Posterior cingulate gyrus (tissue), 11 donors: ENCODE measurements at regions of chr21 and their contacts with region 1.

Region 1: DNA sequence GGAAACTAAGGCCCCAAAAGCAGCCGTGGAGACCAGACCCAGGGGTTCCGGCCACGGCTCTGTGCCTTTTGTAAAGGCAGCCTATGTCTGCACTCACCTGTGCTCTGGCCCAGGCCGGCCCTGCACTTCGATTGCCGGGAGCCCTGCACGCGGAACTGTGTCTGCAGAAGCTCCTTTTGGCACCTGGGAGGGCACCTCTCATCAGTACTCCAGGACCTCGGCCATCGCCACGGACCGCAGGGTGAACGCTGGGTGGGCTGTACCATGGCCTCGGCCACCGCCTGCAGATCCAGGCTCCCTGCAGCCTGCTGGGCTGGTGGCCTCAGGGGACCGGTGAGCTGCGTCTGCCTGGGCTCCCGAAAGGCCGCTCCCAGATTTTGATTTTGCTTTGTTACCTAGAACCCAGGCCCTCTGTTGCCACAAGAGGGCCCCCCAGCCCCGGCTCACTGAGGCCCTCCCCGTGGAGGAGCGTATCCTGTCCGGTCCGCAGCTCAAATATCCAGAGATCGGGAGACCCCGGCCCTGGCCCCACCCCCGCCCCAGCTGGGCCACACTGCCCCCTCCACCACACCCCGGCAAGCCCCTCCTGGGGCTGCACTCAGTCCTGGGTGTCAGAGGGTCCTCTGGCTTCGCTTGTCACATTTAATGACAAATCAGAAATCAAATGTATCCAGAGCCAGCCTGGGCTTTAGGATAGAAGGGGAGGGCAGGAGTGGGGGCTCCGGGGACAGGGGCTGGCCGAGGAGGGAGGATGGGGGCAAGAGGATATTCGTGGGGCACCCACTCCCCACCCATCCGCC is 60.2 kb upstream of the PDE9A start:
- DNase-seq: peak; percentile 40 to 96 (median 75)

Region 2: GRCh38 chr21:42258153-42258884 is 334.9 kb before region 1 on chr21:
- intact Hi-C with region 1: no loop called
- DNase-seq: peak; percentile 49 to 96 (median 80)

Region 3: GRCh38 chr21:42350896-42351543 is 242.2 kb before region 1 on chr21 and contains the start of gene TFF2:
- intact Hi-C with region 1: no loop called
- DNase-seq: peak in 1 of 10 donors; percentile 63

Region 4: GRCh38 chr21:42652527-42653230 is 59.5 kb after region 1 on chr21:
- intact Hi-C with region 1: loop called (anchors 10 kb)
- DNase-seq: peak in 9 of 10 donors; percentile 33 to 94 (median 64)

Region 5: DNA sequence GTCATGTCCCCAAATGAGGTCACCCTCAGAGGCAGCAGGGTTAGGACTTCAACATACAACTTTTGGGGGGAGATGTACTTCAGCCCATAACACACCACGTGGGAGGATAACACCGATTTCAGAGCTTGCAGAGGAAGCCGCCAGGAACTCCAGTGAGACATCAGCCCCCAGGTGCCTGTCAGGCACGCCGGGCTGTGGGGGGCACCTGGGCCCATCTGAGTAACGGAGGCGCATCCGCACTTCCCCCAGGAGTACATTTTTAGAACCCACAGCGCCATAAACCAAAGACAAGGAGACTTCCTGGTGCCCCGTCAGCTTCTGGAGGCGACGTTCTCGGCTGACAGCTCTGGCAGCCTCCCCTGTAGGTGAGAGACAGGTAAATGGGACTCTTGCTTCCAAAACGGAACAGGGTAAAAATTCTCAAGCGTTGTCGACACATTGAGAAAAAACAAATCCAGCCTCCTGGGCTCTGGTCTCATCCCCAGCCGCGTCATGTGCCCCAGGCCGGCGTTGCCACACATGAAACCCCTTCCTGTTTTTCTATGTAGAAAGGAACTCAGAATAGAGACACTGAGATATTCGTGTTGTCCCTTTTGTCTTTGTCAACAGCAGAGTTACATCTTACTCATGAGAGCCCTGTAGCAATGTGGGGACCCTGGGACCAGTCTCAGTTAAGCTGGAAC is 153.5 kb after region 1 on chr21:
- intact Hi-C with region 1: loop called (anchors 10 kb)
- DNase-seq: peak in 4 of 10 donors; percentile 21 to 76 (median 50)

Region 6: GRCh38 chr21:42818328-42818749 is 225.1 kb after region 1 on chr21:
- intact Hi-C with region 1: loop called (anchors 5 kb)
- DNase-seq: peak in 6 of 10 donors; percentile 41 to 93 (median 50)